Adrenal gland (tissue), 19 donors: ENCODE measurements at regions of chr6 and their contacts with region 1.

Region 1: GRCh38 chr6:106979427-106979884 is 4.9 kb upstream of the CD24 start:
- DNase-seq: peak; percentile 77 to 95 (median 91)
- H3K4me3 ChIP-seq: no peak overlapping the region
- H3K27ac ChIP-seq: no peak overlapping the region
- H3K4me1 ChIP-seq: peaks cover 0 to 6% of the 10 kb centered on the region in 2 donors
- H3K27me3 ChIP-seq: peaks cover 27% of the 10 kb centered on the region
- CTCF ChIP-seq: peak; percentile 82 to 97 (median 89)
- POLR2A ChIP-seq: no peak

Region 2: GRCh38 chr6:106359959-106360409 is 619.5 kb before region 1 on chr6:
- intact Hi-C with region 1: loop called in 1 of 2 experiments (anchors 10 kb)
- DNase-seq: no peak
- H3K4me3 ChIP-seq: peak overlapping the region in 1 of 4 donors; percentile 50
- H3K27ac ChIP-seq: no peak overlapping the region
- H3K4me1 ChIP-seq: peaks cover 0 to 13% of the 10 kb centered on the region in 2 donors
- H3K27me3 ChIP-seq: peaks cover 38% of the 10 kb centered on the region
- CTCF ChIP-seq: no peak
- POLR2A ChIP-seq: no peak

Region 3: GRCh38 chr6:106608062-106608668 is 371.3 kb before region 1 on chr6:
- intact Hi-C with region 1: loop called (anchors 10 kb)
- DNase-seq: peak in 2 of 7 donors; percentile 12 to 19
- H3K4me3 ChIP-seq: no peak overlapping the region
- H3K27ac ChIP-seq: no peak overlapping the region
- H3K4me1 ChIP-seq: no peaks in the 10 kb centered on the region
- H3K27me3 ChIP-seq: no peaks in the 10 kb centered on the region
- CTCF ChIP-seq: peak; percentile 41 to 65 (median 60)
- POLR2A ChIP-seq: no peak